Astrocyte of the cerebellum (primary cell): ENCODE measurements at regions of chr6 and their contacts with region 1.

Region 1: DNA sequence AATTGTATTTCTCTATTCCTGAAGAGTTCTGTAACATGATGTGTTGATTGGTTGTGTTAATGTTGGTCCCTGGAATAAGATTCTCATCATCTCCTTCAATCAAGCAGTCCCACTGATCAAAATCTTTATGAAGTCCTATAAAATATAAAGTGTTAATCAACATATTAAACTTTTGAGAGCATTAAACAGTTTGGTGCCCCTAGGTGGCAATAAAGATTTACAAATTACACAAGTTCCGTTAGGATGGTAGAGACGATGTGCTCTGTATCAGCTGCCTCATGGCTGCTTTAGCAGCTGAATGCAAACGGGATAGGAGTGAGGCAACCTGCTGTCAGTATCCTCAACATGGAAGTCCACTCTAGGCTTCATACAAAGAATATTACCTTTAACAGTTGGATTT is 16.9 kb downstream of the TDRD6 start:
- DNase-seq: peak; percentile 13
- H3K4me3 ChIP-seq: no peak overlapping the region
- CTCF ChIP-seq: no peak

Region 2: DNA sequence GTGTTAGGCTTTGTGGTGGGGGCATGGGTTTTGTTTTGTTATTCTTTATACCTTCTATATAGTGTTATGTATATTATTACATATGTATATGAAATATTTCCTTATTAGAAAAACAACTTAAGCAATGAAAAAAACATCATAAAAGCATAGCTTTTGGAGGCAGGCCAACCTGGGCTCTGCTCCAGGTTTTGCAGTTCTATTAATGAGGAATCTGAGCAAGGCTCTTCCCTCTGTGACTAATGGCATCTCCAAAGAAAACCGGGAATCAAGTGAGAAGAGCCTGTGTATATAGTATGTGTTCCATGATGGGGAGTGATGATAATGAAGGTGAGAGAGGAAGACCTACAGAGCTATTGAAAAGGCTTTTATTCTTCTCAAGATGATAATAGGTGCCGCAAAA is 980.1 kb before region 1 on chr6:
- in situ Hi-C with region 1: no loop called
- DNase-seq: peak; percentile 81
- H3K4me3 ChIP-seq: no peak overlapping the region
- CTCF ChIP-seq: no peak

Region 3: DNA sequence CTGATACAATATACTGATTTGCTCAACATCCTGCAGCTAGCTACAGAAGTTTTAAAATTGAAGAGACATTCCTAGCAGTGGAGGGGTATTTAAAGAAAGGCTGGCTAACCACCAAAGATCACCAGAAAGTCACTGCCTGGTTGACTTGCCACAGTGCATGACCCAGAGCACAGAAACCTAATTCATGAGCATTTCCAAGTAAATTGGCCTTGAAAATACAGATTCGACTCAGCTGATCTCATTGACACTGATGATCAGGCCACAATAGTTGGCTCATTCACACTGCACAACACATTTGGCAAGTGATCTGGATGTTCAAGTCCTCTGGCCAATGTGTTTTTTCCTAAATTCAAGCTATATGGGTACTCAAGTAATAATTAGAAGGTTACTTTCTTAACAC is 30.2 kb before region 1 on chr6:
- in situ Hi-C with region 1: loop called (anchors 5 kb)
- DNase-seq: no peak
- H3K4me3 ChIP-seq: no peak overlapping the region
- CTCF ChIP-seq: no peak

Region 4: GRCh38 chr6:46764961-46765360 is 60.4 kb after region 1 on chr6:
- in situ Hi-C with region 1: loop called (anchors 5 kb)
- DNase-seq: no peak
- H3K4me3 ChIP-seq: no peak overlapping the region
- CTCF ChIP-seq: no peak